A673 (cell line): ENCODE measurements at regions of chr19 and their contacts with region 1.

Region 1: DNA sequence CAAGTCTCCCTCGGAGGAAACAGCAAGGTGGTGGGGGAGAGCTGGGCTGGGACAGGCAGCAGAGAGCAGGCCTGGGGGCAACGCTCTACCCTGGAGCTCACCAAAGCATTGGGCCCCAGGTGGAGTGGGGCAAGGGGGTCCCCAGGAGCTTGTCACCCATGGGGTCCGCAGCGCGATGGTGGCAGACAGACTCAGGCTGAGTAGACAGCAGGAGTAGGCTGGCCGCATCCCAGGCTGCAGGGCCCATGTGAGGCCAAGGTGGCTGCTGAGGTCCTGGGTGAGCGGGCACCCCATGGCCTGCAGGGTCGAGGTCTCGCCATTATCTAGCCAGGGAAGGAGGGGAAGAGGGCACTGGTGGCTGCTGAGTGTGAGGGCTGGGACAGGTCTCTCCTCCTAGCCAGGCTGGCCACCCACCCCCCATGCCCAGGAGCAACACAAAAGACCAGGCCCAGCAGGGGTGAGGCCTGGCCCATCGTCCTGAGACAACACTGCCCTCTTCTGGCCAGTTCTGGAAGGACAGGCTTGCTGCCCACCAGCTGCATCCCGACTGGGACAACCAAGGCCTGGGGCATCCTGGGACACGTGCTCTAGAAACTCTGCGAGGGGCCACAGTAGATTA is 33.1 kb downstream of the CEBPG start:
- DNase-seq: peak; percentile 71
- H3K4me3 ChIP-seq: no peak overlapping the region
- H3K27ac ChIP-seq: no peak overlapping the region
- H3K4me1 ChIP-seq: no peaks in the 10 kb centered on the region
- H3K27me3 ChIP-seq: no peaks in the 10 kb centered on the region
- CTCF ChIP-seq: peak; percentile 90

Region 2: GRCh38 chr19:33052352-33052972 is 354.2 kb before region 1 on chr19:
- CTCF ChIA-PET with region 1: no interaction called
- POLR2A ChIA-PET with region 1: no interaction called
- intact Hi-C with region 1: no loop called
- DNase-seq: peak; percentile 18
- H3K4me3 ChIP-seq: no peak overlapping the region
- H3K27ac ChIP-seq: peak overlapping the region; percentile 29
- H3K4me1 ChIP-seq: peaks cover 4% of the 10 kb centered on the region
- H3K27me3 ChIP-seq: no peaks in the 10 kb centered on the region
- CTCF ChIP-seq: no peak

Region 3: GRCh38 chr19:33125929-33126388 is 280.7 kb before region 1 on chr19:
- CTCF ChIA-PET with region 1: no interaction called
- POLR2A ChIA-PET with region 1: no interaction called
- intact Hi-C with region 1: loop called (anchors 10 kb)
- DNase-seq: peak; percentile 75
- H3K4me3 ChIP-seq: no peak overlapping the region
- H3K27ac ChIP-seq: no peak overlapping the region
- H3K4me1 ChIP-seq: no peaks in the 10 kb centered on the region
- H3K27me3 ChIP-seq: no peaks in the 10 kb centered on the region
- CTCF ChIP-seq: peak; percentile 85

Region 4: GRCh38 chr19:33226550-33227241 is 179.9 kb before region 1 on chr19:
- CTCF ChIA-PET with region 1: interaction called, 13 read pairs
- POLR2A ChIA-PET with region 1: no interaction called
- intact Hi-C with region 1: no loop called
- DNase-seq: peak; percentile 43
- H3K4me3 ChIP-seq: peak overlapping the region; percentile 10
- H3K27ac ChIP-seq: no peak overlapping the region
- H3K4me1 ChIP-seq: no peaks in the 10 kb centered on the region
- H3K27me3 ChIP-seq: peaks cover 52% of the 10 kb centered on the region
- CTCF ChIP-seq: no peak

Region 5: DNA sequence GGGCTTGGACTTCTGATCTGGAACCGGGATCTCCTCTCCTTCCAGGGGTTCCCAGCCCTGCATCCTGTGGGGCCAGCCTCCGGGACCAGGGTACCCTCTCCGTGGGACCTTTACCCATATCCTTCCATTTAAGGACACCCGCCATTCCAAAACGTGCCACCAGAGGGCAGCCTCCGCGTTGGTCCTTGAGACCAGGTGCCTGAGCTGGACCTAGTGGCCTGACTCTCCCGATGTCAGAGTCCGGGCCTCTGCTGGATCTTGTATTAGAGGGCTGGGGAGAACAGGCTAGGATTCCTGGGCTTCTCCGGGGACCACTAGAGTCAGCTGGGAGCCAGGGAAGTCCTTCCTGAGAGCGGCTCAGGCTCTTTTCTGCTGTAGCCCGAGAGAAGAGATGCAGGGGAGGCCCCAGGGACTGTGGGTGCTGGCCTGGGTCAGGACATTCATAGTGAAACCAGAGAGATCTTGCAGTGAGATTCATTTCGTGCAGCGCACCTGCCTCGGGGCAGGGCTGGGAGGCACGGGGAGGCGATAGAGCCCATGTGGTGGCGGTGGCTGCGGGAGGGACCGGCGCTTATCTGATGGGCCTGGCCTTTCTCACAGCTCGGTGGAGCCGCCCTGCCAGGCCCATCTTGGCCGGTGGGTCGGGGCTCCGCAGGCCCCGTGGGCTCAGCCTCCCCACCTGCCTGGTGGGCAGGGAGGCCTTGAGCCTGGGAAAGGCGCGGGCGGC is 171.2 kb before region 1 on chr19:
- CTCF ChIA-PET with region 1: interaction called, 6 read pairs
- POLR2A ChIA-PET with region 1: no interaction called
- intact Hi-C with region 1: loop called (anchors 2 kb)
- DNase-seq: peak; percentile 67
- H3K4me3 ChIP-seq: no peak overlapping the region
- H3K27ac ChIP-seq: no peak overlapping the region
- H3K4me1 ChIP-seq: no peaks in the 10 kb centered on the region
- H3K27me3 ChIP-seq: no peaks in the 10 kb centered on the region
- CTCF ChIP-seq: peak; percentile 90

Region 6: GRCh38 chr19:33241530-33242101 is 165.0 kb before region 1 on chr19:
- CTCF ChIA-PET with region 1: interaction called, 8 read pairs
- POLR2A ChIA-PET with region 1: no interaction called
- intact Hi-C with region 1: loop called (anchors 2 kb)
- DNase-seq: no peak
- H3K4me3 ChIP-seq: no peak overlapping the region
- H3K27ac ChIP-seq: no peak overlapping the region
- H3K4me1 ChIP-seq: no peaks in the 10 kb centered on the region
- H3K27me3 ChIP-seq: no peaks in the 10 kb centered on the region
- CTCF ChIP-seq: peak; percentile 76